ENCODE measurements at regions of chr12 and their contacts with region 1.

Region 1: GRCh38 chr12:56521590-56522371 is at the start of gene RBMS2:
- DNase-seq: peak; percentile 19
- H3K4me3 Mint-ChIP-seq: peak within 1 kb of the TSS; percentile 89
- H3K27ac Mint-ChIP-seq: peak within 1 kb of the TSS; percentile 23
- H3K4me1 Mint-ChIP-seq: peaks cover 28% of the 10 kb centered on the region
- H3K27me3 Mint-ChIP-seq: no peaks in the 10 kb centered on the region
- total RNA-seq, gene RBMS2: 4.0 and 6.5 TPM in 2 replicates

Region 2: GRCh38 chr12:56020423-56021184 is 501.2 kb before region 1 on chr12 and contains the start of gene IKZF4:
- intact Hi-C with region 1: no loop called
- DNase-seq: no peak
- H3K4me3 Mint-ChIP-seq: peak within 1 kb of the TSS; percentile 97
- H3K27ac Mint-ChIP-seq: peak within 1 kb of the TSS; percentile 98
- H3K4me1 Mint-ChIP-seq: peaks cover 45% of the 10 kb centered on the region
- H3K27me3 Mint-ChIP-seq: no peaks in the 10 kb centered on the region
- total RNA-seq, gene IKZF4: 31.9 and 35.7 TPM in 2 replicates

Region 3: DNA sequence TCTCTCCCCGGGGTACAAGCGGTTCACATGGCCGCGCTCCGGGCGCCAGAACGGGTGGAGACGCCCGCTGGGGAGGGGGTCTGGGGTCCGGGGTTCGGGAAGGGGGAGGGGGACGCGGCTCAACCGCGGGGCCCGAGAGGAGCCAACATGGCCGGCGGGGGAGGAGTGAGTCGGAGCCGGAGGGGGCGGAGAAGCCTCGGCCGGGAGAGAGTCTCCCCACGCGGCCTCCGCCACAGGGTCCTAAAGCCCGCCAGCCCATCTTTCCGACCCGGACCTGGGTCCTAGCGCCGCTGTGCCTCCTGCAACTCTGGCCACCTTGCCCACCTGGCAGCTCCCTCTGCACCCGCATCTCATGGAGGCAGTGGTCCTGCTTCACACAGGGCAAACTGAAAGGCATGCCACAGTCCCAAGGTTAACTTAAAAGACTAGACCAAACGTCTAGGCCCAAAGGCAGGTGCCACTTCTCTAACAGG is 108.4 kb after region 1 on chr12 and contains the start of gene BAZ2A:
- intact Hi-C with region 1: loop called (anchors 2 kb)
- DNase-seq: peak; percentile 85
- H3K4me3 Mint-ChIP-seq: peak within 1 kb of the TSS; percentile 97
- H3K27ac Mint-ChIP-seq: peak within 1 kb of the TSS; percentile 89
- H3K4me1 Mint-ChIP-seq: peaks cover 72% of the 10 kb centered on the region
- H3K27me3 Mint-ChIP-seq: no peaks in the 10 kb centered on the region
- total RNA-seq, gene BAZ2A: 119 and 126 TPM in 2 replicates

Measured in activated T-helper 1 cell treated with anti-CD3 and anti-CD28 coated beads, Interleukin-12 subunit alpha, Interleukin-12 subunit beta, Interleukin-2, Interleukin-4 antibody, amounts not matched to agents 30 ng/mL and 10 ng/mL and 1 ng/mL, durations not matched to agents 14 hours and 24 hours and 36 hours (primary cell).